Mammary epithelial cell (primary cell): ENCODE measurements at regions of chr3 and their contacts with region 1.

Region 1: DNA sequence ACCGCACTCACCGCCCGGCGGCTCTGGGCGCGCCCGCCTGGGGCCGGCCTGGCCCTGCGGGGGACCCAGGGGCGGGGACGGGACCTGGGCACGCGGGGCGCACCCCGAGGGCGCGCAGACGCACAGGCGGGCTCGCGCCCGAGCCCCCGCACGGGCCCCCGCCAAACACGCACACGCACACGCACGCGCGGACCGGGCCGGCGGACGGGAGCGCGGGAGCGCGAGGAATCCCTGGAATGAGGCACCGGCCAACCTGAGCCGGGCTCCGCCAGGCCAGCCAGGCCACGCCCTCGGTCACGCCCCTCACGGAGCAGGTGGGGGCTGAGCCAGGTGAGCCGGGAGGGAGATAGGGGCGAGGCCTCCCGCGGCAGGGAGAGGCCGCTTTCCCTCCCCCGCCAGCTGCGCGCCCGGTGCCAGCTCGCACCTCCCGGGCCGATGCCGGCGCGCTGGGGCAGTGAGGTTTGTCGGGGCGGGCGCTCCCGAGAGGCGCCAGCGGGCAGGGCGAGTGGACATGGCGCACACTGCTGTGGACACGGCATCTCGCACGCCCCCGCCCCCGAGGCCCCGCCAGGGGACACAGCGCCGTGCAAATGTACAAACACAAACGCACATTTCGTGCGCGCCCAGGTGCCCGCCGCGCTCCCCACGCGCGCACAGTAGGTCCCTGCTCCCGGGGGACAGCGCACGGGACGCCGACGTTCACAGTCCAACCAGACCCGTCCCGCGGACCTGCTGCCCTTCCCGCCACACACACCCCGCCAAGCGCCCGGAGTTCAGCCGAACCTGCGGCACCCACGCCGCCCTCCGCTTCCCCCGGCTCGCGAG is 75.9 kb upstream of the VGLL4 start:
- DNase-seq: peak; percentile 94
- H3K4me3 ChIP-seq: peak overlapping the region; percentile 71 to 95 (median 83)
- H3K27ac ChIP-seq: peak overlapping the region; percentile 93
- H3K4me1 ChIP-seq: peaks cover 22% of the 10 kb centered on the region
- H3K27me3 ChIP-seq: no peaks in the 10 kb centered on the region
- CTCF ChIP-seq: no peak

Region 2: DNA sequence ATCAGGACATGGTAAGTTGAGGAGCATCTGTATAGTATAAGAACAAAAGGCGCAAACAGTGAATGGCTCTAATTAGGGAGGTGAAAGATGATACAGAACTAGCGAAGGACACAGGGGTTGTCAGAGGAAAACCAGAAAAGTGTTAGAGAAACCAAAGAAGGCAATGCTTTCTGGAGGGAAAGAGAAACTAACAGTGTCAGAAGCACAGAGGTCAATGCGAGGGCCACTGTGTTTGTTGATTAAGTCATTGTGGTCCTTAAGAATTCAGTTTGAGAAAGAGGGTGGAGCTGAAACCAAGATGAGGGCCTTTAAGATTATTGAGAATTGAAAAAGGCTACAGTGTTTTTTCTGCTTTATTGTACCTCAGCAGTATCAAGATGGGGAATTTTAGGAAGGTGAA is 418.6 kb before region 1 on chr3:
- CTCF ChIA-PET with region 1: no interaction called
- dilution Hi-C with region 1: no loop called
- in situ Hi-C with region 1: no loop called
- intact Hi-C with region 1: no loop called
- DNase-seq: no peak
- H3K4me3 ChIP-seq: no peak overlapping the region
- H3K27ac ChIP-seq: no peak overlapping the region
- H3K4me1 ChIP-seq: no peaks in the 10 kb centered on the region
- H3K27me3 ChIP-seq: no peaks in the 10 kb centered on the region
- CTCF ChIP-seq: no peak

Region 3: GRCh38 chr3:11379233-11379823 is 340.3 kb before region 1 on chr3:
- CTCF ChIA-PET with region 1: no interaction called
- dilution Hi-C with region 1: no loop called
- in situ Hi-C with region 1: no loop called
- intact Hi-C with region 1: loop called (anchors 2 kb)
- DNase-seq: peak; percentile 31
- H3K4me3 ChIP-seq: no peak overlapping the region
- H3K27ac ChIP-seq: no peak overlapping the region
- H3K4me1 ChIP-seq: peaks cover 13% of the 10 kb centered on the region
- H3K27me3 ChIP-seq: no peaks in the 10 kb centered on the region
- CTCF ChIP-seq: peak; percentile 53 to 61

Region 4: GRCh38 chr3:11601446-11602238 is 118.0 kb before region 1 on chr3:
- CTCF ChIA-PET with region 1: no interaction called
- dilution Hi-C with region 1: no loop called
- in situ Hi-C with region 1: no loop called
- intact Hi-C with region 1: loop called (anchors 1 kb)
- DNase-seq: no peak
- H3K4me3 ChIP-seq: no peak overlapping the region
- H3K27ac ChIP-seq: no peak overlapping the region
- H3K4me1 ChIP-seq: peaks cover 31% of the 10 kb centered on the region
- H3K27me3 ChIP-seq: no peaks in the 10 kb centered on the region
- CTCF ChIP-seq: no peak

Region 5: GRCh38 chr3:11662402-11662990 is 57.1 kb before region 1 on chr3:
- CTCF ChIA-PET with region 1: no interaction called
- dilution Hi-C with region 1: no loop called
- in situ Hi-C with region 1: no loop called
- intact Hi-C with region 1: loop called (anchors 1 kb)
- DNase-seq: peak; percentile 29
- H3K4me3 ChIP-seq: no peak overlapping the region
- H3K27ac ChIP-seq: no peak overlapping the region
- H3K4me1 ChIP-seq: peaks cover 12% of the 10 kb centered on the region
- H3K27me3 ChIP-seq: no peaks in the 10 kb centered on the region
- CTCF ChIP-seq: peak; percentile 53 to 69

Region 6: GRCh38 chr3:11770477-11771391 is 51.1 kb after region 1 on chr3:
- CTCF ChIA-PET with region 1: no interaction called
- dilution Hi-C with region 1: no loop called
- in situ Hi-C with region 1: no loop called
- intact Hi-C with region 1: loop called (anchors 1 kb)
- DNase-seq: peak; percentile 99
- H3K4me3 ChIP-seq: peak overlapping the region; percentile 1 to 36 (median 14)
- H3K27ac ChIP-seq: peak overlapping the region; percentile 90
- H3K4me1 ChIP-seq: peaks cover 33% of the 10 kb centered on the region
- H3K27me3 ChIP-seq: no peaks in the 10 kb centered on the region
- CTCF ChIP-seq: no peak

Region 7: DNA sequence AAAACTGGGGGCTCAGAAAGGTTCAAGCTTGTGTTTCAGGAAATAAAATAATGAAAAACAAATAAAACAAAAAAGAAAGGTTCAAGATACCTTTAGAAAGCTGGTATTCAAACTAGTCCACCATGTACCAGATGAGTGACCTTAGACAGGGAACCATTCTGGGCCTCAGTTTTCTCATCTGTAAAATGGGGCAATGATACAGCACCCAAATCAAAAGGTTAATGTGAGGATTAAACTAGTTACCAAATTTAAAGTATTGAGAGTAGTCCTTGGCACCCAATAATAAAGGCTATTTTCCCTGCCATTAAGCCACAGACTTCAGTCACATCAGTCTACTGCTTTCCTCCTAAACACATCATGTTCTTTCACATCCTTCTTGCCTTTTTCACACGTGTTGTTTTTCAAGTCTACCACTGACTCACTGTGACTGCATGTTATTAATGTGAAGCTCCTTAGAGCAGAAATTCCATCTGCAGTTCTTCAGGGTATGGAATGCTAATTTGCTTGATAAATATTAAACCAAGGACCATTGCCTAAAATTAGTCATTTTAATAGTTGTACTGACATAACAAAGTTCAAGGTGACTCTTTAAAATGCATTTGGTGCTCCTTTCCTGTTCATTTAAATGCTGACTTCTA is 107.1 kb after region 1 on chr3:
- CTCF ChIA-PET with region 1: interaction called, 28 read pairs
- dilution Hi-C with region 1: no loop called
- in situ Hi-C with region 1: no loop called
- intact Hi-C with region 1: no loop called
- DNase-seq: no peak
- H3K4me3 ChIP-seq: no peak overlapping the region
- H3K27ac ChIP-seq: no peak overlapping the region
- H3K4me1 ChIP-seq: no peaks in the 10 kb centered on the region
- H3K27me3 ChIP-seq: no peaks in the 10 kb centered on the region
- CTCF ChIP-seq: no peak